ENCODE measurements at regions of chr22 and their contacts with region 1.

Region 1: GRCh38 chr22:40679964-40680818 is 907 bp downstream of the MCHR1 start:
- DNase-seq: no peak
- H3K4me3 Mint-ChIP-seq: no peak overlapping the region
- H3K27ac Mint-ChIP-seq: no peak overlapping the region
- H3K4me1 Mint-ChIP-seq: peaks cover 29% of the 10 kb centered on the region
- H3K27me3 Mint-ChIP-seq: peaks cover 14% of the 10 kb centered on the region

Region 2: DNA sequence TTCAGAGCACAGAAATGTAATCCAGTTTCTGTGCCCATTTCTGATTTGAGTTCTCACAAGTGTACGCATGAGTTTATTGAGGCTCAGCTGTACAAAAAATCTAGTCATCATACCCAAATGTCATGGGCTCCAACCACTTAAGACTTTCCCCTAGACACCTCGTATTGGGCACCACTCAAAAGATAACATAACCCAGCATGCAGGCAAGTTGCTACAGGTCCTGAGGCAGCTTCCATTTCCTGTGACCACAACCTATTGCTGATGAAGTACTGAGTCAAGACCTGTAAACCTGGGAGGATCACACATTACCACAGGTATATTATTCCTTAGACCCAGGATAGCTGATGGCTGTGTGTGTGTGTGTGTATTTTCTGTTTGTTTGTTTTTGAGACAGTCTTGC is 138.9 kb before region 1 on chr22:
- CTCF ChIA-PET with region 1: no interaction called
- POLR2A ChIA-PET with region 1: no interaction called
- DNase-seq: peak; percentile 12
- H3K4me3 Mint-ChIP-seq: no peak overlapping the region
- H3K27ac Mint-ChIP-seq: no peak overlapping the region
- H3K4me1 Mint-ChIP-seq: peaks cover 16% of the 10 kb centered on the region
- H3K27me3 Mint-ChIP-seq: no peaks in the 10 kb centered on the region

Region 3: GRCh38 chr22:40691532-40691931 is 11.3 kb after region 1 on chr22:
- CTCF ChIA-PET with region 1: interaction called, 10 read pairs
- POLR2A ChIA-PET with region 1: no interaction called
- DNase-seq: no peak
- H3K4me3 Mint-ChIP-seq: no peak overlapping the region
- H3K27ac Mint-ChIP-seq: no peak overlapping the region
- H3K4me1 Mint-ChIP-seq: no peaks in the 10 kb centered on the region
- H3K27me3 Mint-ChIP-seq: peaks cover 3% of the 10 kb centered on the region

Region 4: GRCh38 chr22:40757071-40757470 is 76.9 kb after region 1 on chr22:
- CTCF ChIA-PET with region 1: interaction called, 17 read pairs
- POLR2A ChIA-PET with region 1: interaction called, 5 read pairs
- DNase-seq: no peak
- H3K4me3 Mint-ChIP-seq: no peak overlapping the region
- H3K27ac Mint-ChIP-seq: no peak overlapping the region
- H3K4me1 Mint-ChIP-seq: no peaks in the 10 kb centered on the region
- H3K27me3 Mint-ChIP-seq: no peaks in the 10 kb centered on the region

Region 5: GRCh38 chr22:40856513-40857308 is 176.5 kb after region 1 on chr22 and contains the starts of genes ST13 and XPNPEP3:
- CTCF ChIA-PET with region 1: interaction called, 21 read pairs
- POLR2A ChIA-PET with region 1: interaction called, 7 read pairs
- DNase-seq: peak; percentile 98
- H3K4me3 Mint-ChIP-seq: peak within 1 kb of the TSS; percentile 98
- H3K27ac Mint-ChIP-seq: peak within 1 kb of the TSS; percentile 100
- H3K4me1 Mint-ChIP-seq: peaks cover 52% of the 10 kb centered on the region
- H3K27me3 Mint-ChIP-seq: no peaks in the 10 kb centered on the region
- total RNA-seq, gene ST13: 147 to 180 TPM
- total RNA-seq, gene XPNPEP3: 11.9 to 17.8 TPM